CD8-positive, alpha-beta T cell (primary cell): ENCODE measurements at regions of chr10 and their contacts with region 1.

Region 1: GRCh38 chr10:19431622-19432351 is 383.2 kb downstream of the MALRD1 start:
- DNase-seq: no peak
- ATAC-seq: no peak
- H3K4me3 ChIP-seq: no peak overlapping the region
- H3K4me3 Mint-ChIP-seq: no peak overlapping the region
- H3K27ac ChIP-seq: no peak overlapping the region
- H3K27ac Mint-ChIP-seq: no peak overlapping the region
- H3K4me1 ChIP-seq: no peaks in the 10 kb centered on the region
- H3K4me1 Mint-ChIP-seq: no peaks in the 10 kb centered on the region
- H3K27me3 ChIP-seq: no peaks in the 10 kb centered on the region
- H3K27me3 Mint-ChIP-seq: no peaks in the 10 kb centered on the region
- CTCF ChIP-seq: no peak

Region 2: DNA sequence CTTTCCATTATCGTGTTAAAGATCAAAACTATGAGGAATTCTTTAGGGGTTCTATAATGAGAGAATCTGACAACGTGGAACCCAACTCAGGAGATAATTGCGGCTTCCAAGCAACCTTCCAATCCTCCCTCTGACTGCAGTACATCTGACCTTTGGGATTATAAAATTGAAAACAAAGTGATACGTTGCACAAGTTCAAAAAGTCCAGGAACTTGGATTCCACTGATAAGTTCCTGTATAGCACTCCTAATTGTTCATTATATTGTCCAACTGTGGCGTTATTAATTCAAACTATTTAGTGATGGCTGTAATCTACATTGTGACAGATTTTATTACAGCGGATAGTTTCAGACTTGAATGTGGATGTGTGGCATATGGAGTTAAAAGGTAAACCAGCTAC is 367.8 kb before region 1 on chr10:
- CTCF ChIA-PET with region 1: no interaction called
- POLR2A ChIA-PET with region 1: no interaction called
- intact Hi-C with region 1: loop called in 1 of 2 experiments (anchors 10 kb)
- DNase-seq: no peak
- ATAC-seq: no peak
- H3K4me3 ChIP-seq: no peak overlapping the region
- H3K4me3 Mint-ChIP-seq: no peak overlapping the region
- H3K27ac ChIP-seq: no peak overlapping the region
- H3K27ac Mint-ChIP-seq: no peak overlapping the region
- H3K4me1 ChIP-seq: no peaks in the 10 kb centered on the region
- H3K4me1 Mint-ChIP-seq: no peaks in the 10 kb centered on the region
- H3K27me3 ChIP-seq: no peaks in the 10 kb centered on the region
- H3K27me3 Mint-ChIP-seq: no peaks in the 10 kb centered on the region
- CTCF ChIP-seq: no peak